Ascending aorta (tissue), 2 donors: ENCODE measurements at regions of chr19 and their contacts with region 1.

Region 1: GRCh38 chr19:49850473-49851342 is at the start of gene PTOV1:
- DNase-seq: peak; percentile 51 to 96
- H3K4me3 ChIP-seq: peak within 1 kb of the TSS; percentile 85 to 90
- H3K27ac ChIP-seq: peak within 1 kb of the TSS; percentile 99 to 100
- H3K4me1 ChIP-seq: peaks cover 4 to 10% of the 10 kb centered on the region in 2 donors
- H3K27me3 ChIP-seq: no peaks in the 10 kb centered on the region
- CTCF ChIP-seq: peak in 1 of 3 experiments; percentile 4
- total RNA-seq, gene PTOV1: 163 TPM

Region 2: DNA sequence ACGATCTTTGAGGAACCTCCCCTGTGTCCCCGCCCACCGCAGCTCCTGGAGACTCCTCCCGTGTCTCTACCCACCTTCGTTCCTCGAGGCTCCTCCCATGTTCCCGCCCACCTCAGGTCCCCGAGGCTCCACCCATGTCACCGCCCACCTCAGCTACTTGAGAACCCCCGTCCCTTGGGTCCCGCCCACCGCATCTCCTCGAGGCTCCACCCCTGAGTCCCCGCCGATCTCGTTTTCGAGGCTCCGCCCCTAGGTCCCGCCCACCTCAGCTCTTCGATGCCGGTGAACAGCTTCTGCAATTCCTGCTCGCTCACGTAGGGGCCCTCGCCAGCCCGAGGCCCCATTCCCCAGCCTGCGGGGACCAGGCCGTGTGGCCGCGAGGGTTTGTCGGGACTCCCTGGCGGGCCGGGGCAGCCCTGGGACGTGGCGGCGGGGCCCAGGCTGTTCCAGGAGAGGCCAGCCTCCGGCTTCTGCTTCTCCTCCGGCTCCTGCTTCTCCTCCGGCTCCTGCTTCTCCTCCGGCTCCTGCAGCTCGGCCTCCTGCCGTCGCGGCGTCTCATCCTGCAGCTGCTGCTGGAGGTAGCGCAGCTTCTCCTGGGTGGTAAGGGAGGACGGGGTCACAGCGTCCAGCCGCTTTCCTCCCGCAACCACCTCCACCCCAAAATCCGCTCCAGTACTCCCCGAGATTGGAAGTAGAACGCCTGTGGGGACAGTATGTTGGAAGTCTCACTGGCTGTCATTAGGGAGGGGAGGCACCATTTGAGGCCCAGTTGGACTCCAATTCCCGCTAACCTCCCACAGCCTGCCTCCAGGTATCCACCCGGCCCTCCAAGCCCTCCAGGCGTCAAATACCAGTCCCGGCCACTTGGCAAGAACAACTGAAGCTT is 104.3 kb before region 1 on chr19:
- intact Hi-C with region 1: loop called (anchors 1 kb)
- DNase-seq: peak in 1 of 2 donors; percentile 74
- H3K4me3 ChIP-seq: no peak overlapping the region
- H3K27ac ChIP-seq: no peak overlapping the region
- H3K4me1 ChIP-seq: no peaks in the 10 kb centered on the region
- H3K27me3 ChIP-seq: no peaks in the 10 kb centered on the region
- CTCF ChIP-seq: no peak

Region 3: DNA sequence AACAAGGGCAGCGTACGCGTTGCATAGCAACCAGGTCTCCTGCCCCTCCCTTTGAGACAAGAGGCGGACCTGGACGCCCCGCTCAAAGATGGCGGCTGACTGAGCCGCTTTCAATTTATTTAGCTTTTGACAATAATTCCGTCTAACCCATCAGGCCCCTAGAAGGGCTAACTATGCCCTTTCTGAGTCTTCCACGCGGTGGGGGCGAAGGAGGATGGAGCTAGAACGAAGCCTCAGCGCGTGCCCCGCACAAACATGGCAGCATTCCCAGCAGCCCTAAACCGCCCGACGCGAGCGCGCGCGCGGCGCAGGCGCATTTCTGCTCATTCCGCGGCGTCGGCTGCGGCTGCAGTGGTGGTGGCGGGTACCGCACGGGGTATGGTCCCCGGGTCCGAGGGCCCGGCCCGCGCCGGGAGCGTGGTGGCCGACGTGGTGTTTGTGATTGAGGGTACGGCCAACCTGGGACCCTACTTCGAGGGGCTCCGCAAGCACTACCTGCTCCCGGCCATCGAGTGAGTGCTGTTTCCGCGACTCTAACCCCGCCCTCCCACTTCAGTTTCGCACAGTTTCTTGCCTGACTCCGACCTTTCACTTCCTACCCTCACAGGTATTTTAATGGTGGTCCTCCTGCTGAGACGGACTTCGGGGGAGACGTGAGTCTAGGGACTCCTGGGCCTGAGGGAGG is 32.6 kb before region 1 on chr19 and contains the start of gene MED25:
- intact Hi-C with region 1: loop called (anchors 1 kb)
- DNase-seq: peak; percentile 30 to 92
- H3K4me3 ChIP-seq: peak within 1 kb of the TSS; percentile 78 to 85
- H3K27ac ChIP-seq: peak within 1 kb of the TSS; percentile 93 to 97
- H3K4me1 ChIP-seq: peaks cover 0 to 24% of the 10 kb centered on the region in 2 donors
- H3K27me3 ChIP-seq: no peaks in the 10 kb centered on the region
- CTCF ChIP-seq: peak; percentile 29 to 89 (median 33)
- total RNA-seq, gene MED25: 54.0 TPM

Region 4: GRCh38 chr19:49869441-49870176 is 18.9 kb after region 1 on chr19:
- intact Hi-C with region 1: loop called (anchors 1 kb)
- DNase-seq: peak; percentile 95 to 98
- H3K4me3 ChIP-seq: peak overlapping the region; percentile 72 to 74
- H3K27ac ChIP-seq: peak overlapping the region; percentile 93 to 97
- H3K4me1 ChIP-seq: peaks cover 19 to 32% of the 10 kb centered on the region in 2 donors
- H3K27me3 ChIP-seq: no peaks in the 10 kb centered on the region
- CTCF ChIP-seq: no peak